ENCODE measurements at regions of chr16 and their contacts with region 1.

Region 1: DNA sequence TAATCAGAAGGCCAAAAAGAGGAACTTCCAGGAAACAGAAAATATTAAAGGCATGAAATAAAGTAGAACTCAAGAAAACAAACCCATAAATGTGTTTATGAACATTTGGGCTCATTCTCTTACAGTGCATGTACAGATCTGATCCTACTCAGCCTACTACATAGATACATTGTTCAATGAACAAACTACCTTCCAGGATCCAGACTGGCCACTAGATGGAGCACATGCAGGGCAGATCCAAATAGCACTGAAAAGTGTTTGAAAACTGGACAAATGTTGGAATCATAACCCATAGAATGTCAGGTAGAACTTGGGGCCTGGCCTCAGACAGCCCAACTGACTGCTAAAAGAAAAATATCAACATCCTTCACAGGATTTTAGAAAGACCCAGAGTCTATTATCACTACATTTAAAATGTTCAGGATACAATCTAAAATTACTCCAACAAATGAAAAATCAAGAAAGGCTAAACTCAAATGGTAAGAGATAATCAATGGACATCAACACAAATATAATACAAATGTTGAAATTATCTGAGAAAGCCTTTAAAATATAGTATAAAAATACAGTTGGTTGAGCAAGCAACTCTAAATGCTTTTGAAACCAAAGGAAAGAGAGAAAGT is 122.4 kb upstream of the NUDT7 start:
- DNase-seq: no peak
- ATAC-seq: no peak

Region 2: GRCh38 chr16:77364770-77365169 is 235.1 kb before region 1 on chr16:
- intact Hi-C with region 1: no loop called
- DNase-seq: no peak
- ATAC-seq: no peak

Region 3: DNA sequence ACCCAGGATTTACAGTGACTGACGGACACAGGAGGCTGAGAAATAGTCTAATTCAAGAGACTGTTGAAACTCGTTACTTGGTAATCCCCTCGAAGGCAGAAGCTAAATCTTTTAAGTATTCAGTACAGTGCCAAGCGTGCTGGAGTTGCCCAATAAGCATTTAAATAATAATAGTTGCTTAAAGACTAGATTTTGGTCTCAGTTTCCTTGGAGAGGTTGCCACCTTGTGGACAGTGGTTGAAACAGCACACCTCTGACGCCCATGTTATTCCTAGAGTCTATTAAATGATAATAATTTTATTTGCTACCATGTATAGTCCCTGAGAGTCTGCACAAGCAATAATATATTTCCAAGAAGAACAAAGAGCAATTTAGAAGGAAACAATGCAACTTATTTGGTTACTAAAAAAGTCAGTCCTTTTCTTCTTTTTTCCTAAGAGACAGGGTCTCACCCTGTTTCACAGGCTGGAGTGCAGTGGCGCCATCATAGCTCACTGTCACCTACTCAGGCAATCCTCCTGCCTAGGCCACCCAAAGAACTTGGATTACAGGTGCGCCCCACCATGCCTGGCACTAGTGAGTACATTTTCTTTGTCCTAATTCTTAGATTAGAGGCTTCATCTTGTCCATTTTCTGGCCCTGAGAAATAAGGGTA is 15.6 kb before region 1 on chr16:
- intact Hi-C with region 1: no loop called
- DNase-seq: no peak
- ATAC-seq: no peak

Region 4: DNA sequence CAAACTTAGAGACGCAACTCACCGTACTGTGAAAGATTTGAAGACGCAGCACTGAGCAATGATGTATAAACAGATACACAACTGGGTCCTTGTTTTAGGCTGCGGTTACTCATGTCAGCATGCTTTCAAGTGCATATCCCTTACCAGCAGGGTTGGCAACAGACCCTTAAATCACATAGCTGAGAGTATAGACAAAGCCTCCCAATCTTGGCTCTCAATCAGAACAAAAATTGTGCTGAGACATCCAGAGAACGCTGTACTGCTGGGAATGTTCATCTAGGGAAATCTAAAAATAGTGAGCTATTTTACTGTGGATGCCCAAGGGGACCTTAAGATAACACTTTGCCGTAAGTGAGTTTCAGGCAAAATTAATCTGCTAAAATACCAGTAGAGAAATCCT is 38.0 kb after region 1 on chr16:
- intact Hi-C with region 1: no loop called
- DNase-seq: no peak
- ATAC-seq: no peak

Region 5: GRCh38 chr16:77660311-77660710 is 60.4 kb after region 1 on chr16:
- intact Hi-C with region 1: loop called (anchors 5 kb)
- DNase-seq: no peak
- ATAC-seq: no peak

Measured in Right ventricle myocardium inferior (tissue), 1 donor.